Activated B cell treated with CpG ODN at 0.5 μM for 24 hours (primary cell): ENCODE measurements at regions of chr12 and their contacts with region 1.

Region 1: GRCh38 chr12:31659087-31659933 is at the start of gene ETFBKMT:
- DNase-seq: peak; percentile 88
- ATAC-seq: peak; percentile 98
- H3K4me3 Mint-ChIP-seq: peak within 1 kb of the TSS; percentile 96
- H3K27ac Mint-ChIP-seq: peak within 1 kb of the TSS; percentile 99
- H3K4me1 Mint-ChIP-seq: peaks cover 35% of the 10 kb centered on the region
- H3K27me3 Mint-ChIP-seq: no peaks in the 10 kb centered on the region
- CTCF ChIP-seq: no peak
- total RNA-seq, gene ETFBKMT: 0.91 and 2.0 TPM in 2 replicates

Region 2: DNA sequence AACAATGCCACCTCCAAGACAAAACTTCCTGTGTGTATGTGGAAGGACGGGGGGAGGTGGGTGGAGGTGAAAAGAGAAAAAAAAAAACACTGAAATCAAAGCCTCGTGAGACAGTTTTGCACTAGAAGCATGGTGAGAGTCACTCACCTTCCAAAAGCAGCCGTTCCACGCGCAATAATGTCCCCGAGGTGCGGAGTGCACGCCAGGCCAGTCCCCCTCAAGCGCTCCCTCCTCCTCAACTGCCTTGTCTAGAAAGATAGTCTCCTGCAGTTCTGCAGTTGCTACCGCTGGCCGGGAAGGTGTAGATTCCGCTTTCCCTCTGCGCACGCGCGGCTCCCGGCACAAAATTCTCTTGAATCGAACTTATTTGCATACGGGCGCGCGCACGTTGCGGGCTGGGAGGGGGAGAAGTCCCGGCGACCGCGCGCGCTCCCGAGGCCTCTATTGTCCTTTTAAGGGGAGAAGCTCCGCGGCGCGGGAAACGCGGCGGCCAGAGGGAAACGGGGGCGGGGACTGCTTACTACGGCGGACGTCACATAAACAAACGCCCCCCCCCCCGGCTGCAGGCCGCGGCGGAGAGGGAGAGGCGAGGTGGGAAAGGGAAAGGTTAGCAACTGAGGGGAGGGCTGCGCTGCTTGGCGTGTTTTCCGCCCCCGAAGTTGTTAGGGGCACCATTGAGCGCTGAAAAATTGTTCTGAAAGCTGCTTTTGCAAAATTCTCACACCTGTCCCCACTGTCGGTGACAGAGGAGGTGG is 333.3 kb before region 1 on chr12 and contains the start of gene SINHCAF:
- CTCF ChIA-PET with region 1: no interaction called
- POLR2A ChIA-PET with region 1: no interaction called
- intact Hi-C with region 1: loop called (anchors 1 kb)
- DNase-seq: peak; percentile 99
- ATAC-seq: peak; percentile 62
- H3K4me3 Mint-ChIP-seq: peak within 1 kb of the TSS; percentile 96
- H3K27ac Mint-ChIP-seq: peak within 1 kb of the TSS; percentile 97
- H3K4me1 Mint-ChIP-seq: peaks cover 34% of the 10 kb centered on the region
- H3K27me3 Mint-ChIP-seq: no peaks in the 10 kb centered on the region
- CTCF ChIP-seq: no peak
- total RNA-seq, gene SINHCAF: 153 and 157 TPM in 2 replicates

Region 3: DNA sequence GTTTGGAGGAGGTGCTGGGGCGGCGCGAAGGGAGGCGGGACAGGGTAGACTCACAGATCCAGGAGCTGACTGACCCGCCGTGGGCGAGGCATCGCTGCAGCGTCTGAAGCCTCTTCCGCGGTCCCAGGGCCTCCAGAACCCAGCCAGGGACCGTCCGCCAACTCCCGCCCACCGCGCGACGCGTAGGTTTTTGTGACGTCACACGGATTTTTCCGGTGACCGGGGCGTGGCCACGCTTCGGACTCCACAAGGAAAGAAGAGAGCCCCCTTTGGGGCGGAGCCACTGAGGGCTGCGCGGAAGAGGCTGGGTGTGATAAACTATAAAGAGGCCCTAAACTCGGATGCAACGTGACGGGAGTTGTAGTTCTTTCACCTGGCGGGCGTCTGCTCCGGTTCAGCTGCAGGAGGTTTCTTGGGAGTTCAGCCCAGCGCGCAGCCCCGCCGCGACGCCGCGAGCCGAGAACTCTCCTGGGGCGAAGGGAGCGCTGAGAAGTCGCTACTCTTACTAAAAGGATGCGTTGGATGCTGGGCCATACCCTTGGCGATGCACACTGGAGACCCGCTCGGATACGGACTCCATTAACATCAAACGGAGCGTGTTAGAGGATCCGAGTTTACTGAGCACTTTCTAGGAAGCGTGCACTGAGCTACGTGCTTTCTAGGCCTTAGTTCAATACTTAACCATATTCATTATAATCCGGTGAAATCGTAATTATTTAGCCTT is 69.8 kb after region 1 on chr12 and contains the start of gene AMN1:
- CTCF ChIA-PET with region 1: no interaction called
- POLR2A ChIA-PET with region 1: interaction called, 11 read pairs
- intact Hi-C with region 1: loop called (anchors 1 kb)
- DNase-seq: peak; percentile 100
- ATAC-seq: peak; percentile 90
- H3K4me3 Mint-ChIP-seq: peak within 1 kb of the TSS; percentile 92
- H3K27ac Mint-ChIP-seq: peak within 1 kb of the TSS; percentile 98
- H3K4me1 Mint-ChIP-seq: peaks cover 74% of the 10 kb centered on the region
- H3K27me3 Mint-ChIP-seq: no peaks in the 10 kb centered on the region
- CTCF ChIP-seq: no peak
- total RNA-seq, gene AMN1: 13.7 and 15.5 TPM in 2 replicates

Region 4: DNA sequence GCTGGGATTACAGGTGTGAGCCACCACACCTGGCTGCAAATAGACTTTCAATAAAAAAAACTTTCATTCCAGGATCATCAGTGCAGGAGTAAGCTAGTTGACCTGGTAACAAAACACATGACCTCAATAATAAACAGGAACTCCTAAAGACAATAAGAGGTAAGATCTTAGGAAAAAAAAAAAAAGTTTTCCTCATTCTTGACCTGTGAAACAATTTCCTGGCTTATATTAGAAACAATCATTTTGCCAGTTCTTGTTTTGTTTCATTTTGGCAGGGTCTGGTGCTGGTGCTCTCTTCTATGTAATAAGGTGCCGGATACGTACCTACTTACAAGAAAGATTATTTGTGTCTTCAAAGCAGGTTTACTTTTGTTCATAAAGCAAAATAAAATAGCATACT is 160.1 kb after region 1 on chr12:
- CTCF ChIA-PET with region 1: no interaction called
- POLR2A ChIA-PET with region 1: no interaction called
- intact Hi-C with region 1: no loop called
- DNase-seq: no peak
- ATAC-seq: no peak
- H3K4me3 Mint-ChIP-seq: no peak overlapping the region
- H3K27ac Mint-ChIP-seq: no peak overlapping the region
- H3K4me1 Mint-ChIP-seq: peaks cover 22% of the 10 kb centered on the region
- H3K27me3 Mint-ChIP-seq: no peaks in the 10 kb centered on the region
- CTCF ChIP-seq: no peak

Region 5: GRCh38 chr12:31859232-31859977 is 200.1 kb after region 1 on chr12:
- CTCF ChIA-PET with region 1: no interaction called
- POLR2A ChIA-PET with region 1: no interaction called
- intact Hi-C with region 1: loop called (anchors 1 kb)
- DNase-seq: peak; percentile 35
- ATAC-seq: peak; percentile 93
- H3K4me3 Mint-ChIP-seq: peak overlapping the region; percentile 61
- H3K27ac Mint-ChIP-seq: peak overlapping the region; percentile 87
- H3K4me1 Mint-ChIP-seq: peaks cover 31% of the 10 kb centered on the region
- H3K27me3 Mint-ChIP-seq: no peaks in the 10 kb centered on the region
- CTCF ChIP-seq: no peak

Region 6: GRCh38 chr12:32139064-32139421 is 479.7 kb after region 1 on chr12:
- CTCF ChIA-PET with region 1: no interaction called
- POLR2A ChIA-PET with region 1: interaction called, 4 read pairs
- intact Hi-C with region 1: loop called (anchors 1 kb)
- DNase-seq: peak; percentile 27
- ATAC-seq: peak; percentile 83
- H3K4me3 Mint-ChIP-seq: peak overlapping the region; percentile 79
- H3K27ac Mint-ChIP-seq: peak overlapping the region; percentile 96
- H3K4me1 Mint-ChIP-seq: peaks cover 74% of the 10 kb centered on the region
- H3K27me3 Mint-ChIP-seq: no peaks in the 10 kb centered on the region
- CTCF ChIP-seq: no peak

Region 7: DNA sequence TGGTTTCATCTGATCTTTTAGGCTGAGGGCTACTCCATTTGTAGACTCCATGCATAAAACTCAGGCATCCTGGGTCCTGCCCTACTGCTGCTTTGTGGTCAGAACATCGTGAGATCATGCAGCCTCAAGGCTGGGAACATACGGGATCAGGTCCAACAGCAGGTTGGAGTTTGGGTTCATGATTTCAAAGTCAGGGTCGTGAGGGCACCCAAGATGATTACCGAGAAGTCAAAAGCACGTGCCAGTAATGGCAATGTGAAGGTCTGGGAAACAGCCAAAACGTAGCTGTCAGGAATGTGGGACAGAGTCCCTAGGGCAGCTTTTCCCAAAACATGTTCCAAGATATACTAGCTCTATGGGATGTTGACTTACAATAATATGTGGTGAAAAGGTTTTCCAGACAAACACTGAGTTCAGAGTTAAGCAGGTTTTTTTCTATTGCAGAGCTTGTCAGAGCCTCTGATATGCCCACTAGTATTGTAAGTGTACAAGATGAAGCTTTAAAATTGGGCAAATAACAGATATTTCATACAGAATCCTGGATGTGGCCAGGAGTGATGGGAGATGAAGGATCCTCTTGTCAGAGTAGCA is 889.5 kb after region 1 on chr12:
- CTCF ChIA-PET with region 1: no interaction called
- POLR2A ChIA-PET with region 1: no interaction called
- intact Hi-C with region 1: loop called (anchors 10 kb)
- DNase-seq: no peak
- ATAC-seq: no peak
- H3K4me3 Mint-ChIP-seq: no peak overlapping the region
- H3K27ac Mint-ChIP-seq: peak overlapping the region; percentile 19
- H3K4me1 Mint-ChIP-seq: peaks cover 48% of the 10 kb centered on the region
- H3K27me3 Mint-ChIP-seq: no peaks in the 10 kb centered on the region
- CTCF ChIP-seq: no peak